Activated naive CD8-positive, alpha-beta T cell treated with anti-CD3 and anti-CD28 coated beads, Interleukin-2, amount 10 ng/mL, durations not matched to agents 7 days and 5 days (primary cell): ENCODE measurements at regions of chr2 and their contacts with region 1.

Region 1: GRCh38 chr2:200525882-200526651 is at the start of gene SGO2:
- DNase-seq: peak; percentile 96
- ATAC-seq: peak; percentile 99
- H3K4me3 Mint-ChIP-seq: peak within 1 kb of the TSS; percentile 94
- H3K27ac Mint-ChIP-seq: peak within 1 kb of the TSS; percentile 85
- H3K4me1 Mint-ChIP-seq: peaks cover 25% of the 10 kb centered on the region
- H3K27me3 Mint-ChIP-seq: peaks cover 8% of the 10 kb centered on the region
- total RNA-seq, gene SGO2: 35.0 to 37.4 TPM

Region 2: DNA sequence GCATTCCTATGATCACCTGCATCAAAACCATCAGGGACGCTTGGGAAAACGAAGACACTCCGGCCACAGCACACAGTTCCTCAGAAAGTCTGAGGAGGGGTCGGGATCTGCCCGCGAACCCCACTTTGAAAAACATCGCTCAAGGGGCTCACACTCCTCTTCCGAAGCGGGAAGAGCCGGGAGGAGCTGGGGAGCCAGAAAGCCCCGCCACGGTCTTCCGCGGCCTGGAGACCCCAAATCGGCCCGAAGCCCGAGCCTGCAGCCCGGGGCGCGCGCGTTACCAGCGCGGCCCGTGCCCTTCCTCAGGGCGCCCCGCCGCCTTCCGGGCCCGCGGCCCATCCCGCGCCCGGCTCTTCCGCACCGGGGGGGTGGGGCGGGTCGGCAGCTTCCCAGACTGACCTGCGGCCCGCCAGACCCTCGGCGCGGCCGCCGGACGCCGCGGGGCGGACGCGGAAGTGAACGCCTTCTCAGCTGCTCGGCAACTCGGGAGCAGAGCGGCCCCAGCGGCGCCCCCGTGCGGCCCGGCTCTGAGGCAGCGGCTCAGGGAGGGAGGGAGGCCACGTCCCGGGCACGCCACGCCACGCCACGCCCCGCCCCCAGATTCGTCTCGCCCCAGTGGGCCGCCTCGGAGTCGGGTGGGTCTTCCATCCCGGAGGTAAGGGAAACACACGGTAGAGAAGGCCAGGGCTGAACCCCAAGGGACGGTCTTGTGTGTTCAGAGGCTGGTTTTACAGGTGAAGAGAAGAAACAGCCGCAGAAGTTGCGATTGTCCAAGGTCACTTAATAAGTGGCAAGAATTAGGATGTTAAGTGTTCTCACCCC is 16.2 kb before region 1 on chr2 and contains the start of gene KCTD18:
- POLR2A ChIA-PET with region 1: interaction called, 13 read pairs
- DNase-seq: peak; percentile 96
- ATAC-seq: peak; percentile 99
- H3K4me3 Mint-ChIP-seq: peak within 1 kb of the TSS; percentile 92
- H3K27ac Mint-ChIP-seq: peak within 1 kb of the TSS; percentile 81
- H3K4me1 Mint-ChIP-seq: peaks cover 12% of the 10 kb centered on the region
- H3K27me3 Mint-ChIP-seq: no peaks in the 10 kb centered on the region
- total RNA-seq, gene KCTD18: 18.1 to 21.5 TPM

Region 3: DNA sequence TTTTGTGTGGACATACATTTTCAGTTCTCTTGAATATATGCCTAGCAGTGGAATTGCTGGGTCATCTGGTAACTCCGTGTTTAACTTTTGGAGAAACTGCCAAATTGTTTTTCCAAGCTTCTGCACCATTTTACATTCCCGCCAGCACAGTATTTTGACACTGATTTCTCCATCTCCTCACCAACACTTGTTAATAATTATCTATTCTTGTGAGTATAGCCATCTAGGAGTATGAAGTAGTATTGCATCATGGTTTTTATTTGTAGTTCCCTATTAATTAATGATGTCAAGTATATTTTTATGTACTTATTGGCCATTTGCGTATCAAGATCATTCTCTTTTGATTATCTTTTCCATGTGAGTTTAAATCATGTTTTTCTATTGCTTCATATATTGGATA is 41.9 kb after region 1 on chr2:
- POLR2A ChIA-PET with region 1: no interaction called
- DNase-seq: no peak
- ATAC-seq: no peak
- H3K4me3 Mint-ChIP-seq: no peak overlapping the region
- H3K27ac Mint-ChIP-seq: no peak overlapping the region
- H3K4me1 Mint-ChIP-seq: peaks cover 3% of the 10 kb centered on the region
- H3K27me3 Mint-ChIP-seq: no peaks in the 10 kb centered on the region

Region 4: DNA sequence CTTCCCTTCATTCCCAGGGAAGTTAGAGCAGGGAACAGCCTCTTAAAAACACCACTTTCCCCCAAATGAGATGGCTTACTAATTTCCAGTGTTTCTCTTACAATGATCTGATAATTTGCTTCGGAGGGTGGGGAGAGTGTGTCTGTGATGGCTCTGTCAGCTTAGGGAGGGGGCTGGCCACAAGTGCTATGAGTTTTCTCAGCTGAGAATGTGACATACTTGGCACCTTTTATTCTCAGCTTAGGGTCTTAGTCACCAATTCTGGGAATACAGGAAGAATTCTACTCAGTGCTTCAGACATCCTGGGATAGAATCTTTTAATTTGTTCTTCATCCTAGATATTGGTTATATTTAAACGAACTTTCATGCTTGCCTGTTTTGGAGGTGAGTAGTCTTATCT is 124.1 kb after region 1 on chr2:
- POLR2A ChIA-PET with region 1: no interaction called
- DNase-seq: no peak
- ATAC-seq: no peak
- H3K4me3 Mint-ChIP-seq: no peak overlapping the region
- H3K27ac Mint-ChIP-seq: no peak overlapping the region
- H3K4me1 Mint-ChIP-seq: no peaks in the 10 kb centered on the region
- H3K27me3 Mint-ChIP-seq: peaks cover 19% of the 10 kb centered on the region